PC-3 (cell line): ENCODE measurements at regions of chr20 and their contacts with region 1.

Region 1: DNA sequence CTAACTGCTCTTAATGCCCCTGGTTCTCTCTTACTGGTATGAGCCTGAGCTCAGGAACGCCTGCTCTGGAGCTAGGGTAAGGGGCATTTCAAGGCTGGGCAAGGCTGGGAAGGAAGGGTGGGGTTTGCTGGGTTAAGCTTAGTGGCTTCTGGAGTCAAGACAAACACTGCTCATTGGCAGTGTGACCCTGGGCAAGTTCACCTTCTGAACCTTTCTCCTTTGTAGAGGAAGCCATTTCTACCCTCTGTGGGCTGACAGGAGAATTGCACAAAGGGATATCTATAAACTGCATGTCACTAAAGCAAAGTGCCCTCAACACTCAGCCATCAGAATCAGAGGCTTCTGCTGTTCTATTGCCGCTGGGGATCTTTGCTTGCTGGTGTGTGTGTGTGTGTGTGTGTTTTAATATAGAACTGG is 20.3 kb upstream of the LRRN4 start:
- DNase-seq: peak; percentile 26
- ATAC-seq: peak; percentile 82
- H3K4me3 ChIP-seq: no peak overlapping the region
- H3K27ac ChIP-seq: no peak overlapping the region
- H3K4me1 ChIP-seq: no peaks in the 10 kb centered on the region
- H3K27me3 ChIP-seq: no peaks in the 10 kb centered on the region
- CTCF ChIP-seq: peak; percentile 53; the same call in 1 of the 2 replicates

Region 2: GRCh38 chr20:6008254-6008653 is 65.9 kb before region 1 on chr20:
- CTCF ChIA-PET with region 1: no interaction called
- POLR2A ChIA-PET with region 1: no interaction called
- intact Hi-C with region 1: loop called (anchors 1 kb)
- DNase-seq: peak; percentile 92
- ATAC-seq: peak; percentile 36
- H3K4me3 ChIP-seq: peak overlapping the region; percentile 96
- H3K27ac ChIP-seq: no peak overlapping the region; the same call in 1 of the 2 replicates
- H3K4me1 ChIP-seq: peaks cover 23% of the 10 kb centered on the region
- H3K27me3 ChIP-seq: no peaks in the 10 kb centered on the region
- CTCF ChIP-seq: no peak

Region 3: DNA sequence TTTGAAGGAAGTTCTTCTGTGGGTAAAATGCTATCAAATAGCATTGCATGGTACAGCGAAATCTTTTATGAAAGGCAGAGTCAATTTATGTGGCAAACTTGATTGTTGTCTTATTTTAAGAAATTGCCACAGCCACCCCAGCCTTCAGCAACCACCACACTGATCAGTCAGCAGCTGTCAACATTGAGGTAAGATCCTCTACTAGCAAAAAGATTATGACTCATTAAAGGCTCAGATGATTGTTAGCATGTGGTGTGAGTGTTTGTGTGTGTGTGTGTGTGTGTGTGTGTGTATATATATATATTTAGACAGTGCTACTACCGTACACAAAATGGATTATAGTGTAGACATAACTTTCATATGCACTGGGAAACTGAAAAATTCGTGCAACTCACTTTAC is 48.1 kb before region 1 on chr20:
- CTCF ChIA-PET with region 1: no interaction called
- POLR2A ChIA-PET with region 1: no interaction called
- intact Hi-C with region 1: loop called (anchors 5 kb)
- DNase-seq: peak; percentile 73
- ATAC-seq: peak; percentile 88
- H3K4me3 ChIP-seq: no peak overlapping the region
- H3K27ac ChIP-seq: 0 out of 2 replicates have a peak overlapping the region, but pooled peaks have one; percentile 5
- H3K4me1 ChIP-seq: peaks cover 21% of the 10 kb centered on the region
- H3K27me3 ChIP-seq: no peaks in the 10 kb centered on the region
- CTCF ChIP-seq: no peak

Region 4: GRCh38 chr20:6053776-6054688 is 20.1 kb before region 1 on chr20 and contains the start of gene LRRN4:
- CTCF ChIA-PET with region 1: no interaction called
- POLR2A ChIA-PET with region 1: no interaction called
- intact Hi-C with region 1: no loop called
- DNase-seq: peak; percentile 96
- ATAC-seq: peak; percentile 95
- H3K4me3 ChIP-seq: peak within 1 kb of the TSS; percentile 45; the same call in 1 of the 2 replicates
- H3K27ac ChIP-seq: no peak within 1 kb of the TSS
- H3K4me1 ChIP-seq: peaks cover 22% of the 10 kb centered on the region
- H3K27me3 ChIP-seq: no peaks in the 10 kb centered on the region
- CTCF ChIP-seq: no peak
- total RNA-seq, gene LRRN4: 0.44 TPM in 1 of 2 replicates, not detected in the other

Region 5: GRCh38 chr20:6178537-6178936 is 104.4 kb after region 1 on chr20:
- CTCF ChIA-PET with region 1: no interaction called
- POLR2A ChIA-PET with region 1: no interaction called
- intact Hi-C with region 1: no loop called
- DNase-seq: peak; percentile 72
- ATAC-seq: peak; percentile 69
- H3K4me3 ChIP-seq: no peak overlapping the region
- H3K27ac ChIP-seq: no peak overlapping the region
- H3K4me1 ChIP-seq: no peaks in the 10 kb centered on the region
- H3K27me3 ChIP-seq: peaks cover 67% of the 10 kb centered on the region
- CTCF ChIP-seq: peak; percentile 87